ENCODE measurements at regions of chr16 and their contacts with region 1.

Region 1: DNA sequence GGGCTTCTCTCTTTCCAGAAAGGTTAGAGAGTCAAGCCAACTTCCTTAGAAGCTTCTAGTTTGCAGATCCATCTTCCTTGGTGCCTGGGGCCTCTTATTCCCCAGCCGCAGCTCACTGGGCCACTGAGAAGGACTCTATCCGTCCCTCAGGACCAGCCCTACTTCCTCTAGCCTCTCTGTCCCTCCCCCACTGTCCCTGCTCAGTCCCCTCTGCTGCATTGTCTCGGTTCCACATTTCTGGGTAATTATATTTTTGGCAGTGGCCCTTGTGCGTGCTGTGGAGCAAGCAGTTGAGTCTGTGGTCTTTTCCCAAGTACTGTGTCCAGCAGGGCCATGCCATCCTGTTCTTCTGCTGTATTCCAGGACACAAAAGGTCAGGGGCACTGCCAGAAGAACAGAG is 17.8 kb downstream of the IRX3 start:
- DNase-seq: no peak
- H3K4me3 ChIP-seq: no peak overlapping the region
- H3K27ac ChIP-seq: no peak overlapping the region
- H3K4me1 ChIP-seq: peaks cover 13% of the 10 kb centered on the region; the same call in 1 of the 2 replicates
- H3K27me3 ChIP-seq: no peaks in the 10 kb centered on the region
- CTCF ChIP-seq: no peak

Region 2: DNA sequence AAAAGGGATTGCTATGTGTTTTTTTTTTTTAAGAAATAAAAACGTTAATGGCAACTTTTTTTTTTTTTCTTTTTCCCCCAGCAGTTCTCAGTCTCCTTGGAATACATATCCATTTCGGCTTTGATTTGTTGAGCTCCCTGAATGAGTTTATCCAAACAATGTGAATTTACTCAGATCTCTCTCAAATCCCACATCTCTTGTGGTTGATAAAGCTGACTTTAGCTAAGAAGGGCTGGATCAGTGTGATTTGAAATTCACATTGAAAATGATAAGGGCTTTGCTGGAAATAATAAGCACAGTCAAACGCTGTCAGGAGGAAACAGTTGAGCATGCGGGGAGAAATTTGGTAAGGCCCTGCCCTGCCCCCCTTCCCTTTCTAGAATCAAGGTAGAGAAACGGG is 91.9 kb after region 1 on chr16:
- CTCF ChIA-PET with region 1: no interaction called
- POLR2A ChIA-PET with region 1: interaction called, 16 read pairs
- intact Hi-C with region 1: no loop called
- DNase-seq: no peak
- H3K4me3 ChIP-seq: no peak overlapping the region
- H3K27ac ChIP-seq: no peak overlapping the region
- H3K4me1 ChIP-seq: no peaks in the 10 kb centered on the region
- H3K27me3 ChIP-seq: no peaks in the 10 kb centered on the region
- CTCF ChIP-seq: no peak

Region 3: DNA sequence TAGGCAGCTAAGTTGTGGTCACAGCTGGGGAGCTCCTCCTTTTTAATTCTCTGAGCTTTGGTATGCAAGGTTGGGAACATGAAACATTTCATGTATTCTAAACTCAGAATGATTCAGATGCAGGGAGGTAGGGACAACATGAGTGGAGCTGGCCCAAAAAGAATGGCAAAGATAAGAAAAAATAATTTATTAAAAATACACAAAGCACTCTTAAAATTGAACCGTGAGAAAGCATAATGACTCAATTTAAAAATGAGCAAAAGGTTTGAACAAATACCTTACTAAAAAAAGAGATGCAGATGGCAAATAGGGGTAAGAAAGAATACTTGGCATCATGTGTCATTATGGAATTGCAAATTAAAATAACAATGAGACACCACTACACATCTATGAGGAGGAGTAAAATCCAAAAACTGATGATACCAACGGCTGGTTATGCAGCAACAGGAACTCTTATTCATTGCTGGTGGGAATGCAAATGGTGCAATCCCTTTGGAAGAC is 193.4 kb after region 1 on chr16:
- CTCF ChIA-PET with region 1: no interaction called
- POLR2A ChIA-PET with region 1: no interaction called
- intact Hi-C with region 1: no loop called
- DNase-seq: no peak
- H3K4me3 ChIP-seq: no peak overlapping the region
- H3K27ac ChIP-seq: no peak overlapping the region
- H3K4me1 ChIP-seq: no peaks in the 10 kb centered on the region
- H3K27me3 ChIP-seq: no peaks in the 10 kb centered on the region
- CTCF ChIP-seq: no peak